ENCODE measurements at regions of chr4 and their contacts with region 1.

Region 1: DNA sequence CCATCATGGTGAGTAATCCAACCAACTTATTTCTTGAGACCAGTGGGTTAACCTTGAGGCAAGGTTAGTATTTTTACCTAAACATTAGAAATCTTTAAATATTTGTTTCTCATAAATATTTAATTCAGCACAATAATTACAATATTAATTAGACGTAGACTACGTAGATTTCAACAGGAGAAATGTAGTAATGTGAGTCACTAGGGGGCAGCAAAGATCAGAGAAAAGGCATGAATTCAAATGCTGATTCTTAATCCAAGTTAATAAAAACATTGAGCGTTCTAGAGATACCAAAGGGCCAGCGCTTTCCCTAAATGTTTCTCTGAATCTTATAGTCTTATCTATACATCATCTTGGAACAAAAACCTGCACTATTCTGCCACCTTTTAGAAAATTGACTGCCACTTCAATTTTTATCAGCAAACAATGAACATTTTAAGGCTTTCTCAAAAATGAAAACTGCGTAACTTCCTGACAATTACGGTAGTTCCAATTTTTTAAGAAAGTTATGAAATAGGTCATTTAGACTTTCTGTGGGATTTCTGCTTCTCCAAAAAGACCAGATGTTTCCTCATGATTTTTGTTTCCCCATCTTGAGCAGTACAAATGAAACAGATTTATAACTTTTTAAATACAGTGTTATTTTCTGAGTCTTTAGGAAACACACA is 180.7 kb downstream of the GASK1B start:
- DNase-seq: peak in 2 of 5 donors; percentile 67 to 83
- H3K4me3 ChIP-seq: peak overlapping the region; percentile 31 to 55 (median 40)
- H3K27ac ChIP-seq: peak overlapping the region; percentile 43 to 51
- H3K4me1 ChIP-seq: no peaks in the 10 kb centered on the region
- H3K27me3 ChIP-seq: no peaks in the 10 kb centered on the region
- CTCF ChIP-seq: peak; percentile 71

Region 2: GRCh38 chr4:158065176-158065575 is 73.0 kb after region 1 on chr4:
- intact Hi-C with region 1: no loop called
- DNase-seq: no peak
- H3K4me3 ChIP-seq: no peak overlapping the region
- H3K27ac ChIP-seq: no peak overlapping the region
- H3K4me1 ChIP-seq: no peaks in the 10 kb centered on the region
- H3K27me3 ChIP-seq: no peaks in the 10 kb centered on the region
- CTCF ChIP-seq: no peak

Region 3: DNA sequence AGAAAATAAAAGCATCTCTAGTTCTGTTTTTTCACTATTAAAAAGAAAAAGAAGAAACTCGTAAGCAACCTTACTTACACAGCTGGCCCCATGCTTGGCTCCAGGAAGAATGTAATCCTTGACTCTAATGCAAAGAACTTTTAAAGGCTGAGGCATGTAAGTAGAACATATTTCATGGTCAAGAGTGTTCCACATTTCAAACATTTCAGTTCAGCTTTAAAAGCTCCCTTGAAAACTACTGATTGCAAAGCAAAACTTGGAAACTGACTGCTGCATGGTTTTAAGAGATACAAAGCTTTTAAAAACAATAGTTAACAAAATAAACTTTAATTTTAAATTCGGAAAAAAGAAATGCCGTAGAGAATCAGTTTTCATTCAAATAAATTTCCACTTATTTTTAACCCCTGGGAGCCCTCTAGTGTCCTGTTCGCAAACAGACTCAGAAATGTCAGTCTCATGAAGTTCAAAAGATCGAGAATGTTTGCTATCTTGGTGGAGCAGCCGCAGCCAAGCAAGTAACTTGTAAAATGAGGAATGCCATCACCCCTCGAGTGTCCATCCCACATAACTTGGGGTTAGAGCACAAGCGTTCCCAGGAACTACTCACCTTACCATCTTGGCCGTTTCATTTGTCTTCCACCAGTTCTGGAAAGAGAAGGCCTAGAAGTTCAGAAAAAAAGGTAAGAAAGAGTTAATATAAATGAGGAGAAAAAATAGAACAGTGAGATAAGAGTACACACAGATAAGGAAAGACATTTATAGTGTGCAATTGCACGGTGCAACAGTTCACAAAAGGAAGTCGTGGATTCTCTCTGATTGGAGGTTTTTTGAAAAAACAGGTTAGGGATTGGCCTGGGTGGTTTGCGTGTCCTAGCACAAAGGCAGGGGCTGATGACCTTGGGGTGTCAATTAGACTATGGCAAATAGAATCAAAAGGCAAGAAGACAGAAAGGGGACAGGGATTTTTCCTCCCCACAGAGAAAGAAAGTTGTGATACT is 180.4 kb after region 1 on chr4 and contains the start of gene GASK1B:
- intact Hi-C with region 1: loop called (anchors 10 kb)
- DNase-seq: peak in 3 of 5 donors; percentile 23 to 76 (median 61)
- H3K4me3 ChIP-seq: peak within 1 kb of the TSS; percentile 41 to 56 (median 48)
- H3K27ac ChIP-seq: peak within 1 kb of the TSS; percentile 0 to 35
- H3K4me1 ChIP-seq: peaks cover 0 to 2% (median 0%) of the 10 kb centered on the region in 3 donors
- H3K27me3 ChIP-seq: no peaks in the 10 kb centered on the region
- CTCF ChIP-seq: peak; percentile 71
- total RNA-seq, gene GASK1B: 38.6 TPM

Measured in kidney (tissue), 22 donors.